Caco-2 (cell line): ENCODE measurements at regions of chr22 and their contacts with region 1.

Region 1: GRCh38 chr22:38569972-38570778 is at the start of gene DMC1:
- DNase-seq: peak; percentile 92 to 96
- H3K4me3 ChIP-seq: peak within 1 kb of the TSS; percentile 92
- H3K4me3 Mint-ChIP-seq: peak within 1 kb of the TSS; percentile 87
- H3K27ac Mint-ChIP-seq: peak within 1 kb of the TSS; percentile 82
- H3K4me1 ChIP-seq: peaks cover 5% of the 10 kb centered on the region; the same call in 1 of the 2 replicates
- H3K4me1 Mint-ChIP-seq: peaks cover 11% of the 10 kb centered on the region
- H3K27me3 ChIP-seq: no peaks in the 10 kb centered on the region
- H3K27me3 Mint-ChIP-seq: no peaks in the 10 kb centered on the region
- CTCF ChIP-seq: no peak
- total RNA-seq, gene DMC1: 1.1 and 1.2 TPM in 2 replicates

Region 2: DNA sequence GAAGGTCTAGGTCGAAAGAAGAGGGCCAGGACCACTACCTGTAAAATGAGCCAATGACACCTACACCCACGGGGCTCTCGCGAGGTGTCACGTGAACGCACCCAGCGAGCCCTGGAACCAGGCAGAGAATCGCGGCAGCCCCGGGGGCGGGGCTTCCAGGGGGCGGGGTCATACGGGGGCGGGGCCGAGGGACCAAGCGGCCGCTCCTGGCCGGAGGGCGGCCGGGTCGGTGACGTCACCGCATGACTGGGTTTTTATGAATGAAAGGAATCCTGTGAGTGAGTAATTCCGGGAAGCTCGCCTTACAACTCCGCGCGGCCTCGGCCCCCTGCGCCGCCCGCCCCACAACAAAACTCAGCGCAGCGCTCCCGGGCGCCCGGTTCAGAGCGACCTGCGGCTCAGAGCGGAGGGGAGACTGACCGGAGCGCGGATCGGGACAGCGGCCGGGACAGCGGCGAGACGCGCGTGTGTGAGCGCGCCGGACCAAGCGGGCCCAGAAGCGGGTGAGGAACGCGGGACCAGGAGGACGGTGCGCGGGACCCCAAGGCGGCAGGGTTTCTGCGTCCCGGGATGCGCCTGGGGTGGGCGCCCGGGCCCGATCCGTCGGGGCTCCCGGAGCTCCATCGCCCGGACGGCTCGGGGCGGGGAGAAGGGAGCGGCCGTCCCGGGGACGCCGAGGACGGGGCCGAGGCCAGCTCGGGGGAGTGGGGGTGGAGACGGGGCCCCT is 368.3 kb before region 1 on chr22 and contains the start of gene MAFF:
- CTCF ChIA-PET with region 1: no interaction called
- POLR2A ChIA-PET with region 1: no interaction called
- intact Hi-C with region 1: loop called (anchors 5 kb)
- DNase-seq: peak; percentile 95 to 96
- H3K4me3 ChIP-seq: peak within 1 kb of the TSS; percentile 99
- H3K4me3 Mint-ChIP-seq: peak within 1 kb of the TSS; percentile 78
- H3K27ac Mint-ChIP-seq: peak within 1 kb of the TSS; percentile 43
- H3K4me1 ChIP-seq: peaks cover 9% of the 10 kb centered on the region; the same call in 1 of the 2 replicates
- H3K4me1 Mint-ChIP-seq: peaks cover 13% of the 10 kb centered on the region
- H3K27me3 ChIP-seq: no peaks in the 10 kb centered on the region
- H3K27me3 Mint-ChIP-seq: no peaks in the 10 kb centered on the region
- CTCF ChIP-seq: no peak
- total RNA-seq, gene MAFF: 6.8 and 9.0 TPM in 2 replicates

Region 3: DNA sequence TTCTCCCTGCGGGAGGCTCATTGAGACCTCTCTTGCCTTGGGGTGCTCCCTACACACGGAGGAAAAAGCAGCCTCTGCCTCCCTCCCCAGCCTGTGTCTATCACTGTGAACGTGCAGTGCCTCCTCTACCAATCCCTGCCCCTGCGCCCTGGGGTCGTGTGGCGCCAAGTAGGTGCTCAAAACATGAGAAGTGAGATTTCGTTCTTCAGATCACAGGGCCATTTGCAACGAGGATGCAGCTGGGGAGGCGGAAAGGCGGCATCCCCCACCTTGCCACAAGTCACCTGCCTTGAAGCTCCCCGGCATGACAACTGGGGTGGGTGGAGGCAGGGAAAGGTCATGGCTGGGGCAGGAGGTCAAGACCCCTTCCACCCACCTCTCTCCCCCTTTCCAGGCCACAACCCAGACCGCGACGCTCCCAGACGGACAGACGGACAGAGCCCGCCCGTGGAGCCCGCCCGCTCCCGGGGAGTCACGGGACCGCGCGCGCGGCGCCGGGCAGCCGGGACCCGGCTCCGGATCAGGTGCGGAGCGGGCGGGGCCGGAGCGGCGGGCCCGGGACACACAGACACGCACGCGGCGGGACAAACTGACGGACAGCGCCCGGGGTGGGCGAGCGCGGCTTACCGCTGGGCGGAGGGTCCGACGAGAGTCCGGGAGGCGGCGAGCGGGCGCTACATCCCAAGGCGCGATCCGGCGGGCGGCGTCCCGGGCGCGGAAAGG is 115.7 kb before region 1 on chr22:
- CTCF ChIA-PET with region 1: no interaction called
- POLR2A ChIA-PET with region 1: no interaction called
- intact Hi-C with region 1: no loop called
- DNase-seq: no peak
- H3K4me3 ChIP-seq: peak overlapping the region; percentile 62
- H3K4me3 Mint-ChIP-seq: peak overlapping the region; percentile 64
- H3K27ac Mint-ChIP-seq: no peak overlapping the region
- H3K4me1 ChIP-seq: peaks cover 17% of the 10 kb centered on the region; the same call in 1 of the 2 replicates
- H3K4me1 Mint-ChIP-seq: no peaks in the 10 kb centered on the region
- H3K27me3 ChIP-seq: peaks cover 3% of the 10 kb centered on the region
- H3K27me3 Mint-ChIP-seq: peaks cover 19% of the 10 kb centered on the region
- CTCF ChIP-seq: no peak

Region 4: GRCh38 chr22:38481162-38481870 is 88.9 kb before region 1 on chr22:
- CTCF ChIA-PET with region 1: no interaction called
- POLR2A ChIA-PET with region 1: no interaction called
- intact Hi-C with region 1: loop called (anchors 5 kb)
- DNase-seq: no peak
- H3K4me3 ChIP-seq: no peak overlapping the region
- H3K4me3 Mint-ChIP-seq: no peak overlapping the region
- H3K27ac Mint-ChIP-seq: peak overlapping the region; percentile 15
- H3K4me1 ChIP-seq: peaks cover 11% of the 10 kb centered on the region
- H3K4me1 Mint-ChIP-seq: peaks cover 8% of the 10 kb centered on the region
- H3K27me3 ChIP-seq: no peaks in the 10 kb centered on the region
- H3K27me3 Mint-ChIP-seq: no peaks in the 10 kb centered on the region
- CTCF ChIP-seq: no peak

Region 5: GRCh38 chr22:38513063-38513462 is 57.1 kb before region 1 on chr22:
- CTCF ChIA-PET with region 1: no interaction called
- POLR2A ChIA-PET with region 1: no interaction called
- intact Hi-C with region 1: loop called (anchors 1 kb)
- DNase-seq: peak in 1 of 2 experiments; percentile 62
- H3K4me3 ChIP-seq: no peak overlapping the region
- H3K4me3 Mint-ChIP-seq: no peak overlapping the region
- H3K27ac Mint-ChIP-seq: no peak overlapping the region
- H3K4me1 ChIP-seq: no peaks in the 10 kb centered on the region
- H3K4me1 Mint-ChIP-seq: peaks cover 13% of the 10 kb centered on the region
- H3K27me3 ChIP-seq: no peaks in the 10 kb centered on the region
- H3K27me3 Mint-ChIP-seq: no peaks in the 10 kb centered on the region
- CTCF ChIP-seq: peak in 1 of 2 experiments; percentile 65

Region 6: DNA sequence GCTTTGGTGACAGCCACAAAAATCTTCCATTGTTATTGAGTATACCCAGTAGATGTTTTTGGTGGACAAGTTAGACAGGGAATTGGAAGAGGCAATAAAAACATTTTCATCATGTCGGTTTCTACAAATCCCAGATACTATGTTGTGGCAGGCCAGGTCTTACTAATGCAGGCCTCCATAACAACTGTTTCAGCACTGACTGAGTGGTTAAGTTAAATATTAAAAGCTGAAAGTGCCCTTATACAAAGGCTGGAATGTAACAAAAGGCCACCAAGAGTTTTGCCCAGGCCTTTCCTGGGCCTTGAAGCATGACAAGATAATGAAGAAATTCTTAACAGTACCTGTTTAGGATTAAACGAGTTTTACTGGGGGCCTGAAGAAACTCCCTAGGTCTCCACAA is 29.5 kb before region 1 on chr22:
- CTCF ChIA-PET with region 1: no interaction called
- POLR2A ChIA-PET with region 1: no interaction called
- intact Hi-C with region 1: no loop called
- DNase-seq: peak; percentile 30 to 41
- H3K4me3 ChIP-seq: no peak overlapping the region
- H3K4me3 Mint-ChIP-seq: no peak overlapping the region
- H3K27ac Mint-ChIP-seq: peak overlapping the region; percentile 16
- H3K4me1 ChIP-seq: peaks cover 21% of the 10 kb centered on the region
- H3K4me1 Mint-ChIP-seq: no peaks in the 10 kb centered on the region
- H3K27me3 ChIP-seq: no peaks in the 10 kb centered on the region
- H3K27me3 Mint-ChIP-seq: no peaks in the 10 kb centered on the region
- CTCF ChIP-seq: no peak

Region 7: DNA sequence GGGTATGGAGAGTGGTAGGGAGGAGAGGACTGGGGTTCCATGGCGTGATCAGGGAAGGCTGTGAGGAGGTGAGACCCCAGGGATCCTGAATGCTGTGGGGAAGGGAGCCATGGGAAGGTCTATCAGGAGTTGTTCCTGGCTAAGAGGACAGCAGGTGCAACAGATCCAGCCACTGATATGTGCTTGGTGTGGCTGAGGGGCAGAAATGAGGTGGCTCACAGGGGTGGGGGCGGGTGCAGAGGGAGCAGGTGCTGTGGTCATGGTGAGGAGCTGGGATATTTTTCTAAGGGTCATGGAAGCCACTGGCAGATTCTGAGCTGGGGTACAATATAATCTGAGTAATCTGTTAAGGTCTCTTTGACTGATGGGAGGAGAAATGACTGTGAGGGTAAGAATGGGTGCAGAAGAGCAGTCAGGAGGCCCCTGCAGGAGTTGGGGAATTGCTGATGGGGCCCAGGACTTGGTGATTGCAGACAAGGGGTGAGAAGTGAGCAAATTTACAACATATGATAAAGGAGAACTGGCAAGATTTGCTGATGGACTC is 31.1 kb after region 1 on chr22:
- CTCF ChIA-PET with region 1: no interaction called
- POLR2A ChIA-PET with region 1: no interaction called
- intact Hi-C with region 1: no loop called
- DNase-seq: no peak
- H3K4me3 ChIP-seq: no peak overlapping the region
- H3K4me3 Mint-ChIP-seq: no peak overlapping the region
- H3K27ac Mint-ChIP-seq: no peak overlapping the region
- H3K4me1 ChIP-seq: no peaks in the 10 kb centered on the region
- H3K4me1 Mint-ChIP-seq: no peaks in the 10 kb centered on the region
- H3K27me3 ChIP-seq: no peaks in the 10 kb centered on the region
- H3K27me3 Mint-ChIP-seq: no peaks in the 10 kb centered on the region
- CTCF ChIP-seq: no peak

Region 8: DNA sequence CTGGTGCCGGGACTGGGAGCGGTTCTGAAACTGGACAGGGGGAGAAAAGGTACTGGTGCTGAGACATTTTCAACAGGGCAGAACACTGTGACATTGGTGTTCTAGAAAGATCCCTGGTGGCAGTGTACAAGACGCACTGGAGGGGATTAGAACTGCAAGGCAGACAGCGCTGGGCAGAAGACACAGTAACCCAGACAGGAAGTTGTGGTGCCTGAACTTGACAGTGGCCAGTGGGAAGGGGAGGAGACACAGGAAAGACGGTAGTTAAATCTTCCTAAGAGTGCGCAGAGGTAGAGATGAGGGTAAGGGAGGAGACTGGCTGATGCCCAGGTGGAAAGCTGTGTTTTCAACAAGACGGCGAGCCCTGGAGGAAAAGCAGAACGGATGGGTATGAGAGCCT is 61.5 kb after region 1 on chr22:
- CTCF ChIA-PET with region 1: no interaction called
- POLR2A ChIA-PET with region 1: no interaction called
- intact Hi-C with region 1: no loop called
- DNase-seq: no peak
- H3K4me3 ChIP-seq: no peak overlapping the region
- H3K4me3 Mint-ChIP-seq: no peak overlapping the region
- H3K27ac Mint-ChIP-seq: no peak overlapping the region
- H3K4me1 ChIP-seq: peaks cover 5% of the 10 kb centered on the region; the same call in 1 of the 2 replicates
- H3K4me1 Mint-ChIP-seq: peaks cover 20% of the 10 kb centered on the region
- H3K27me3 ChIP-seq: no peaks in the 10 kb centered on the region
- H3K27me3 Mint-ChIP-seq: no peaks in the 10 kb centered on the region
- CTCF ChIP-seq: no peak